Ascending aorta (tissue), 2 donors: ENCODE measurements at regions of chr20 and their contacts with region 1.

Region 1: DNA sequence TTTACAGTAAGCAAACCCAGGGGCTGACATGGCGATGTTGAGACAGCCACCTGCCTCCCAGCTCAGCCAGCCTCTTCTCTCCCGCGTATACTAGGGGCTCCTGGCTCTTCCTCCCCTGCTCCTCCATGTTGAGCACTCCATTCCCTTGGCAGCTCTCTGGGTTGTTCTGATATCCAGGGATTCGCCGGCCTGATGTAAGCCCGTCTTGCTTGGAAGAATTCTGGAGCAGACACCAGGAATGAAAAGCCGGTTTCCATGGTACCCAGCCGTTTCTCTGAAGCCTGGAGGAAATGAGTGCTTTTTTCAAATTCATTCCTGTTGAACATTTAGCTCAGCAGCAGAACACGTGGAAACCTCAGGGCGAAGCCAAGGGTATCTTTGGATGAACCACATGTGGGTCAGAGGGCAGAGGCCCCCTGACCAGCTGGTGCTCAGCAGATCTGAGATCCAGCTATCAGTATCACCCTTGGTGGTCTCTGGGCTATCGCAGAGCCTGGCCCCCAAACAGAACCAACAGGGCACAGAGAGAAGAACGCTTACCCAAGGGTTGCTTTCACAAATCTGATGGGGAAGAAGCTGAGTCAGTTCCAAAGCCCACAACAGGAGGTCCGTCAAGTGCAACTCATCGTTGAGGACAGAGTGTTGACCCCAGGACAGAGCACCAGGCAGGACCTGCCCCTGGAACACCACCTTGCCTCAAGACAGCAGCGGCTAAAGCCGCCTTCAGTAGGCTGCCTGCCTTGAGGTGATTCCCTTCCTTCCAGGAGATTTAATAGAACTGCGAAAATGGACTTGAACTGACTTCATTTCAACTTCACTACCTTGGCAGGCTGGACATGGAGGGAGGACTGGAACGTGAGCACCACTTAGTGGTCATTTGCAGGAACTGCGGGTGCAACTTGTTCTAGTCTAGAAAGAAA is 96.1 kb upstream of the RIN2 start:
- DNase-seq: peak in 1 of 2 donors; percentile 83
- H3K4me3 ChIP-seq: peak overlapping the region in 1 of 2 donors; percentile 41
- H3K27ac ChIP-seq: peak overlapping the region in 1 of 2 donors; percentile 24
- H3K4me1 ChIP-seq: peaks cover 3 to 5% of the 10 kb centered on the region in 2 donors
- H3K27me3 ChIP-seq: no peaks in the 10 kb centered on the region
- CTCF ChIP-seq: peak; percentile 80 to 97 (median 97)

Region 2: GRCh38 chr20:18645851-18646250 is 1016.1 kb before region 1 on chr20:
- intact Hi-C with region 1: loop called (anchors 10 kb)
- DNase-seq: no peak
- H3K4me3 ChIP-seq: no peak overlapping the region
- H3K27ac ChIP-seq: no peak overlapping the region
- H3K4me1 ChIP-seq: no peaks in the 10 kb centered on the region
- H3K27me3 ChIP-seq: no peaks in the 10 kb centered on the region
- CTCF ChIP-seq: no peak

Region 3: GRCh38 chr20:19205977-19206396 is 456.0 kb before region 1 on chr20:
- intact Hi-C with region 1: loop called (anchors 1 kb)
- DNase-seq: peak in 1 of 2 donors; percentile 83
- H3K4me3 ChIP-seq: no peak overlapping the region
- H3K27ac ChIP-seq: no peak overlapping the region
- H3K4me1 ChIP-seq: peaks cover under 1 to 9% of the 10 kb centered on the region in 2 donors
- H3K27me3 ChIP-seq: no peaks in the 10 kb centered on the region
- CTCF ChIP-seq: peak; percentile 57 to 91 (median 81)